CD4-positive, alpha-beta memory T cell (primary cell): ENCODE measurements at regions of chr9 and their contacts with region 1.

Region 1: DNA sequence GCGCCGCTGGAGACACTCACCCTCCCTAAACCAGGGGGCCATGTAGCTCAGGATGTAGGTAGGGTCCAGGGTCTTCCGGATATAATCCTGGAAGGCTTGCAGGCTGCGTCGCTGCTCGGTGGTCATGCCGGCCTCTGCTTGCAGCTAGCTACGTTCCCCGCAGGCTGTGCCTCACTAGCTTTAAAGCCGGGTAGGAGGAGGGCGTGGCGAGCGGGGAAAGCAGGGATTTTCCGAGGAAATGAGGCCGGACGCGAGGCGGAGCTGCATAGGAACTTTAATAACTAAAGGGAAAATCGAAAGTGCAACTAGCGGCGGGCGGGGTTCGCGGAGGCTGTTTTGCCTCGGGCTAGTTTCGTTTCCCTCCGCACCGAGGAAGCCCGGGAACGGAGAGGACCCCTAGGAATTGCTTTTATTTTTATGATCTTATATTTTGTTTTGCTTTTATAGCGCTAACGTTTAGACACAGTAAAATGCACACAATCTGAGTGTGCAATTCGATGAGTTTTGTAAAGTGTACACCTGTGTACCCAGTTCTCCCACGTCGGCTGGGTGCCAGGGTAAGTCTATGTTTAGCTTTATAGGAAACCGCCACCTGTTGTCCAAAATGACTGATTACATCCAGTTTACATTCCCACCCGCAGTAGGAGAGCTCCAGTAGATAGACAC is at the start of gene RIGI:
- DNase-seq: peak; percentile 80 to 92 (median 81)
- H3K4me3 ChIP-seq: peak within 1 kb of the TSS; percentile 78 to 93
- H3K4me3 Mint-ChIP-seq: peak within 1 kb of the TSS; percentile 91 to 99 (median 97)
- H3K27ac ChIP-seq: peak within 1 kb of the TSS; percentile 94
- H3K27ac Mint-ChIP-seq: peak within 1 kb of the TSS; percentile 93 to 98 (median 97)
- H3K4me1 ChIP-seq: peaks cover 46% of the 10 kb centered on the region
- H3K4me1 Mint-ChIP-seq: peaks cover 40 to 70% (median 54%) of the 10 kb centered on the region in 4 donors
- H3K27me3 ChIP-seq: no peaks in the 10 kb centered on the region
- H3K27me3 Mint-ChIP-seq: no peaks in the 10 kb centered on the region
- total RNA-seq, gene RIGI: 29.0 to 32.0 TPM

Region 2: GRCh38 chr9:32260151-32260862 is 265.9 kb before region 1 on chr9:
- CTCF ChIA-PET with region 1: no interaction called
- POLR2A ChIA-PET with region 1: no interaction called
- intact Hi-C with region 1: no loop called
- DNase-seq: no peak
- H3K4me3 ChIP-seq: no peak overlapping the region
- H3K4me3 Mint-ChIP-seq: no peak overlapping the region
- H3K27ac ChIP-seq: no peak overlapping the region
- H3K27ac Mint-ChIP-seq: no peak overlapping the region
- H3K4me1 ChIP-seq: no peaks in the 10 kb centered on the region
- H3K4me1 Mint-ChIP-seq: no peaks in the 10 kb centered on the region
- H3K27me3 ChIP-seq: no peaks in the 10 kb centered on the region
- H3K27me3 Mint-ChIP-seq: peaks cover 6 to 9% of the 10 kb centered on the region in 2 donors

Region 3: GRCh38 chr9:32350682-32351081 is 175.5 kb before region 1 on chr9:
- CTCF ChIA-PET with region 1: no interaction called
- POLR2A ChIA-PET with region 1: no interaction called
- intact Hi-C with region 1: no loop called
- DNase-seq: peak in 4 of 5 donors; percentile 4 to 20 (median 12)
- H3K4me3 ChIP-seq: no peak overlapping the region
- H3K4me3 Mint-ChIP-seq: no peak overlapping the region
- H3K27ac ChIP-seq: no peak overlapping the region
- H3K27ac Mint-ChIP-seq: no peak overlapping the region
- H3K4me1 ChIP-seq: no peaks in the 10 kb centered on the region
- H3K4me1 Mint-ChIP-seq: no peaks in the 10 kb centered on the region
- H3K27me3 ChIP-seq: no peaks in the 10 kb centered on the region
- H3K27me3 Mint-ChIP-seq: peaks cover 0 to 3% of the 10 kb centered on the region in 2 donors

Region 4: DNA sequence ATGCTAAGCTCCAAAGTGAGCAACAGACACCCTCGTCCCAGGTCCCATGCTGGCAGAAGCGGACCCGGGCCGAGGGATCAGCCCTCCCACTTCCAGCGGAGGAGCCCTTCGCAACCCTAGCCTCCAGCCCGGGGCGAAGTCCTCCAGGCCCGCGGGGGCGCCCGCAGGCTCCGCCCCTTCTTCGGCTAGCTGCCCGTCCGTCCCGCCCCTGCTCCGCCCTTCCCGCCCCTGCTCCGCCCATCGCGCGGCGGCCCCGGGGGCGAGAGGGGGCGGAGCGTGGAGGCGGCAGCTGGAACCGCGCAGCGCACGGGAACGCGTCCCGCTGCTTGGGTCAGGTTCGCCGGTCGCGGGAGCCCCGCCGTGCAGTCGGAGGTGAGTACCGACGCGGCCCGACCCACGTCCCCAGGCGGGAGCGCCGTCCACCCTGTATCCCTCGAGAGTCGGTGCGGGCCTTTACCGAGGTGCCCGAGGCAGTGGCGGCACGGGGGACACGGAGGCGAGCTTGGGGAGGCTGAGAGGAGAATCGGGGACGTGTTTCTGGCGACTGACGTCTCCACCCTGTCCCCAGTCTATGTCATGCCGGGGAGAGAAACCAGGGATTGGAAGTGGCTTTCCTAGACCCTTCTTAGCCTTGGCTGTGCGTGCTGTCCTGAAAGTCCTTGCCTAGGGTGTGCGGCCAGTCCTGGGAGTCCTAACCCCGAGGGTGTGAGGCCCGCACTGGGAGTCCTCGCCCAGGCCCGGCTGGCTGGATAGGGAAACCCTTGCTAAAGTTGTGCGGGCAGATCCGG is 141.6 kb before region 1 on chr9 and contains the start of gene ACO1:
- CTCF ChIA-PET with region 1: interaction called, 133 read pairs
- POLR2A ChIA-PET with region 1: interaction called, 27 read pairs
- intact Hi-C with region 1: loop called (anchors 1 kb)
- DNase-seq: peak; percentile 77 to 89 (median 84)
- H3K4me3 ChIP-seq: peak within 1 kb of the TSS; percentile 79 to 91
- H3K4me3 Mint-ChIP-seq: peak within 1 kb of the TSS; percentile 81 to 90 (median 88)
- H3K27ac ChIP-seq: peak within 1 kb of the TSS; percentile 55
- H3K27ac Mint-ChIP-seq: peak within 1 kb of the TSS in 6 of 7 donors; percentile 3 to 83 (median 58)
- H3K4me1 ChIP-seq: peaks cover 20% of the 10 kb centered on the region
- H3K4me1 Mint-ChIP-seq: peaks cover 12 to 20% (median 17%) of the 10 kb centered on the region in 4 donors
- H3K27me3 ChIP-seq: no peaks in the 10 kb centered on the region
- H3K27me3 Mint-ChIP-seq: peaks cover 3 to 7% of the 10 kb centered on the region in 2 donors
- total RNA-seq, gene ACO1: 7.9 to 9.1 TPM

Region 5: DNA sequence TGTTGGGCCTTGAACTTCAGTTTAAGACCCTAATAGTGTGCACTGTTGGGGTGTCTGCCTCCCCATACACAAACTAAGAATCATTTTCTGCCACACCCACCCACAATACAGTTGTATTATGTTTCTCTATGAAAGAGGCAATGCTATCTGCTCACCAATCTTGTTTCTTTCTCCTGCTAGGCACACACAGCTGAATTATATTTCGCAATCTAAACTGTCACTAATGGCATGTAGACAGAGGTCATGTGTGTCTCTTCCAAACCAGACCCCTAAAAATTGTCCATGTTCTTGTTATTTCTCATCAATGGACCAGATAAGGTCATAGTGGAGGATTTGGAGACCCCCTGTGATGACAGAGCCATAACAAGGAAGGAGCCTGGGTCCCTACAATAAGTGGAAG is 57.4 kb before region 1 on chr9:
- CTCF ChIA-PET with region 1: interaction called, 5 read pairs
- POLR2A ChIA-PET with region 1: no interaction called
- intact Hi-C with region 1: loop called (anchors 5 kb)
- DNase-seq: no peak
- H3K4me3 ChIP-seq: no peak overlapping the region
- H3K4me3 Mint-ChIP-seq: no peak overlapping the region
- H3K27ac ChIP-seq: no peak overlapping the region
- H3K27ac Mint-ChIP-seq: peak overlapping the region in 1 of 7 donors; percentile 12
- H3K4me1 ChIP-seq: no peaks in the 10 kb centered on the region
- H3K4me1 Mint-ChIP-seq: no peaks in the 10 kb centered on the region
- H3K27me3 ChIP-seq: no peaks in the 10 kb centered on the region
- H3K27me3 Mint-ChIP-seq: no peaks in the 10 kb centered on the region

Region 6: DNA sequence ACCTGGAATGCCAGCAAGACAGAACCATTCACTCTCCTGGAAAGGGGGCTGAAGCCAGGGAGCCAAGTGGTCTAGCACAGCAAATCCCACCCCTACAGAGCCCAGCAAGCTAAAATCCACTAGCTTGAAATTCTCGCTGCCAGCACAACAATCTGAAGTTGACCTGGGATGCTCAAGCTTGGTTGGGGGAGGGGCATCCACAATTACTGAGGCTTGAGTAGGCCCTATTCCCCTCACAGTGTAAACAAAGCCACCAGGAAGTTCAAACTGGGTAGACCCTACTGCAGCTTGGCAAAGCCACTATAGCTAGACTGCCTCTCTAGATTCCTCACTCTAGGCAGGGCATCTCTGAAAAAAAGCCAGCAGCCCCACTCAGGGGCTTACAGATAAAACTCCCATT is 17.4 kb before region 1 on chr9:
- CTCF ChIA-PET with region 1: interaction called, 17 read pairs
- POLR2A ChIA-PET with region 1: interaction called, 3 read pairs
- intact Hi-C with region 1: loop called (anchors 2 kb)
- DNase-seq: no peak
- H3K4me3 ChIP-seq: no peak overlapping the region
- H3K4me3 Mint-ChIP-seq: peak overlapping the region in 1 of 8 donors; percentile 23
- H3K27ac ChIP-seq: no peak overlapping the region
- H3K27ac Mint-ChIP-seq: peak overlapping the region in 5 of 7 donors; percentile 23 to 69 (median 33)
- H3K4me1 ChIP-seq: no peaks in the 10 kb centered on the region
- H3K4me1 Mint-ChIP-seq: peaks cover 41 to 55% (median 51%) of the 10 kb centered on the region in 4 donors
- H3K27me3 ChIP-seq: no peaks in the 10 kb centered on the region
- H3K27me3 Mint-ChIP-seq: no peaks in the 10 kb centered on the region

Region 7: DNA sequence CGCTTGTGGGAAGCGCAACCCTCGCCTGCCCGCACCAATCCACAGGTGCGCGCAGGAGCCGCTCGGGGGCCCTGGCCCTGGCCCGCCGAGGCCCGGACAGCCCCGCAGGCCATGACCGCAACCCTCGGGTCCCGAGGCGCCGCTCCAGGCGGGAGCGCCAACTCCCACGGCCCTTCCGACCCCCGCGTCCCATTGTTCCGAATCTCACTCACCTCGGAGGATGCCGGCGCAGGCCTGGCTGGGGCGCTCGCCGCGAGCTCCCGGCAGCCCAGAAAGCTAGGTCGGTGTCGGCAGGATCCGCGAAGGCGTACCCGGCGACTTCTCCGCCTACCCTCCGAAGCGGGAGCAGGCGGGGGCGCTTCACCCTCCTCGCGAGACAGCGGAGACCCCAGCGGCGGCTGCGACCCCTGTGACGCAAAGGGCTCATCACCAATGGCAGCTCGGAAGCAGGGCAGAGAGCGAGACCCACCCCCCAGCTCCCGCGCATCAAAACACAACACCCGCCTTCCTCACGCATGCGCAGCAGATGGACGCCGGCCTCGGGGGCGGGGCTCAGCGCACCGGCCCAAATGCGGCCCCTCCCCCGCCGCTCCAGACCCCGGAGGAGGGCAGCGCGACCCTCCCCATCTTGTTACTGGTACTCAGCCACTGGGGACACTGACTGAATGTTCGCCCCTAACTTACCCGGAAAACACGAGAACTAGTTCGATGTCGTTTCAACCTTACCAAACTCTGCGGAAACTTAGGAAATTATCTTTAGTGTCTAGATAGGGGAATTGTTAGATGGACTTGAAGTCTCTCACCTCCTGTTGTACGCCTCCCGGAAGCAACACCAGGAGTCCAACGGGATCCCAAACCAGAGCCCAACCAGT is 24.6 kb after region 1 on chr9:
- CTCF ChIA-PET with region 1: interaction called, 44 read pairs
- POLR2A ChIA-PET with region 1: interaction called, 62 read pairs
- intact Hi-C with region 1: loop called (anchors 1 kb)
- DNase-seq: peak; percentile 95 to 99 (median 95)
- H3K4me3 ChIP-seq: peak overlapping the region; percentile 93 to 98
- H3K4me3 Mint-ChIP-seq: peak overlapping the region; percentile 92 to 99 (median 97)
- H3K27ac ChIP-seq: peak overlapping the region; percentile 88
- H3K27ac Mint-ChIP-seq: peak overlapping the region; percentile 92 to 100 (median 98)
- H3K4me1 ChIP-seq: peaks cover 47% of the 10 kb centered on the region
- H3K4me1 Mint-ChIP-seq: peaks cover 28 to 66% (median 49%) of the 10 kb centered on the region in 4 donors
- H3K27me3 ChIP-seq: no peaks in the 10 kb centered on the region
- H3K27me3 Mint-ChIP-seq: no peaks in the 10 kb centered on the region

Region 8: GRCh38 chr9:32571969-32572899 is 46.1 kb after region 1 on chr9:
- CTCF ChIA-PET with region 1: interaction called, 50 read pairs
- POLR2A ChIA-PET with region 1: interaction called, 29 read pairs
- intact Hi-C with region 1: loop called (anchors 1 kb)
- DNase-seq: peak; percentile 74 to 89 (median 80)
- H3K4me3 ChIP-seq: peak overlapping the region; percentile 77 to 95
- H3K4me3 Mint-ChIP-seq: peak overlapping the region; percentile 99 to 100 (median 99)
- H3K27ac ChIP-seq: peak overlapping the region; percentile 83
- H3K27ac Mint-ChIP-seq: peak overlapping the region; percentile 96 to 100 (median 99)
- H3K4me1 ChIP-seq: peaks cover 17% of the 10 kb centered on the region
- H3K4me1 Mint-ChIP-seq: peaks cover 19 to 39% (median 26%) of the 10 kb centered on the region in 4 donors
- H3K27me3 ChIP-seq: no peaks in the 10 kb centered on the region
- H3K27me3 Mint-ChIP-seq: peaks cover 0 to 1% of the 10 kb centered on the region in 2 donors

Region 9: GRCh38 chr9:32783169-32783891 is 257.2 kb after region 1 on chr9 and contains the start of gene TMEM215:
- CTCF ChIA-PET with region 1: no interaction called
- POLR2A ChIA-PET with region 1: no interaction called
- intact Hi-C with region 1: no loop called
- DNase-seq: no peak
- H3K4me3 ChIP-seq: no peak within 1 kb of the TSS
- H3K4me3 Mint-ChIP-seq: no peak within 1 kb of the TSS
- H3K27ac ChIP-seq: no peak within 1 kb of the TSS
- H3K27ac Mint-ChIP-seq: no peak within 1 kb of the TSS
- H3K4me1 ChIP-seq: no peaks in the 10 kb centered on the region
- H3K4me1 Mint-ChIP-seq: peaks cover 0 to 2% (median 0%) of the 10 kb centered on the region in 4 donors
- H3K27me3 ChIP-seq: no peaks in the 10 kb centered on the region
- H3K27me3 Mint-ChIP-seq: peaks cover 34 to 35% of the 10 kb centered on the region in 2 donors
- total RNA-seq, gene TMEM215: not detected

Region 10: DNA sequence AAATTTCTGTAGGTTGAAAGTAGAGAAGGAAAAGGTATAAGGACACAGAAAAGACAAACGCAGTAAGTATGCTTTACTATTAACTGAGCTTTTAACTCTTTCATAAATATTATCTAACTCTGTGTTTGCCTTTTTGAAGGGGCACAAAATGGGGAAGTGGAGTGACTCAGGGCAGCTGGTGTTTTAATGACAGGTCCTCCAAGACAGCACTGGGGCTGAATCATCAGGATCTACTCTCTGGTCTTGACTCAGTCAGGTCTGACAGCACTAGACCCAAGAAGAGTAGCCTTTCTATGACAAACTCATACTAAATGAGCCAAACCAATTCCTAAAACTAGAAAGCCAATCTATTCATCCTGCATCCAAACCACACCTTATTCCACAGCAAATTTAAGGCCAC is 373.0 kb after region 1 on chr9:
- CTCF ChIA-PET with region 1: no interaction called
- POLR2A ChIA-PET with region 1: no interaction called
- intact Hi-C with region 1: no loop called
- DNase-seq: no peak
- H3K4me3 ChIP-seq: no peak overlapping the region
- H3K4me3 Mint-ChIP-seq: no peak overlapping the region
- H3K27ac ChIP-seq: no peak overlapping the region
- H3K27ac Mint-ChIP-seq: no peak overlapping the region
- H3K4me1 ChIP-seq: no peaks in the 10 kb centered on the region
- H3K4me1 Mint-ChIP-seq: no peaks in the 10 kb centered on the region
- H3K27me3 ChIP-seq: no peaks in the 10 kb centered on the region
- H3K27me3 Mint-ChIP-seq: peaks cover 9 to 13% of the 10 kb centered on the region in 2 donors